ENCODE measurements at regions of chr1 and their contacts with region 1.

Region 1: GRCh38 chr1:37859507-37860345 is at the start of gene MTF1:
- DNase-seq: peak; percentile 98
- ATAC-seq: peak; percentile 98
- H3K4me3 Mint-ChIP-seq: peak within 1 kb of the TSS; percentile 82
- H3K27ac Mint-ChIP-seq: peak within 1 kb of the TSS; percentile 96
- H3K4me1 Mint-ChIP-seq: peaks cover 35% of the 10 kb centered on the region
- H3K27me3 Mint-ChIP-seq: no peaks in the 10 kb centered on the region
- CTCF ChIP-seq: peak; percentile 97
- total RNA-seq, gene MTF1: 17.7 to 21.3 TPM

Region 2: DNA sequence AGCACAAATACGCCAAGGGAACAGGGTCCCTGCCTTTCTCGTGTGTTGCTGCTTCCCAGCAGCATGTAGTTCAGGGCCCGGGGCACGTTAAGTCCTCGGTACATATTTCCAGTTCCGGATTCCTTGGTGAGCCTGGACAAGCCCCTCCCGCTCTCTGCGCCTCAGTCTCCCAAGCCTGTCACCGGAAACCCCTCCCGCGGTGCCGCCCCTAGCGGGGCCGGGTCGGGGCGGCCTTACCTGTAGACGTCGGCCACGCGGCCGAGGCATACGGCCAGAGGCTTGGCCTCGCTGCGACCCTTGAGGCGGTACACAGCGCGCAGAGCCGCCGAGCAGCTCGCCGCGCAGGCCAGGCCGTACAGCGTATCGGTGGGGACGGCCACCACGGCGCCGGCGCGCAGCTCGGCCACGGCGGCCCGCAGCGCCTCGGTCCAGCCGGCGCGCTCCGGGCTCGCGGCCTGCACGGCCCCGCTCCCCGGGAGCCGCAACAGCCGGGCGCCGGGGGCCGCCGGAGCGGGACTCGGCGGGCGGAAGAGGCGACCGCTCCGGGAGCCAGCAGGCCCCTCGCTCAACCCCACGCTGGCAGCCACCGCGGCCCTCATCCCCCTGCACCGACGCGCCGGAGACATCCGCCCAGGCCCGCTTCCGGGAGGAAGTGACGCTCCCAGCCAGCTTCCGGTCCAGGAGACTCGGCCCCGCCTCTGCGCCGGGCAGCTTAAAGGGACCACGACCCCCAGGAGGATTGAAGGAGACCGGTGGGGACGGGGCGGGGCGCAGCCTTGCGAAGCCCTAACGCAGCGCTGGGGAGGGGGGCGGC is 52.0 kb before region 1 on chr1 and contains the starts of genes C1orf122 and YRDC:
- CTCF ChIA-PET with region 1: interaction called, 36 read pairs
- POLR2A ChIA-PET with region 1: interaction called, 28 read pairs
- intact Hi-C with region 1: loop called (anchors 5 kb)
- DNase-seq: peak; percentile 95
- ATAC-seq: peak; percentile 94
- H3K4me3 Mint-ChIP-seq: peak within 1 kb of the TSS; percentile 83
- H3K27ac Mint-ChIP-seq: peak within 1 kb of the TSS; percentile 91
- H3K4me1 Mint-ChIP-seq: peaks cover 34% of the 10 kb centered on the region
- H3K27me3 Mint-ChIP-seq: no peaks in the 10 kb centered on the region
- CTCF ChIP-seq: no peak
- total RNA-seq, gene C1orf122: 17.4 to 17.9 TPM
- total RNA-seq, gene YRDC: 36.2 to 37.1 TPM

Region 3: GRCh38 chr1:37840711-37841110 is 19.0 kb before region 1 on chr1:
- CTCF ChIA-PET with region 1: interaction called, 33 read pairs
- POLR2A ChIA-PET with region 1: interaction called, 6 read pairs
- intact Hi-C with region 1: no loop called
- DNase-seq: no peak
- ATAC-seq: no peak
- H3K4me3 Mint-ChIP-seq: no peak overlapping the region
- H3K27ac Mint-ChIP-seq: no peak overlapping the region
- H3K4me1 Mint-ChIP-seq: peaks cover 21% of the 10 kb centered on the region
- H3K27me3 Mint-ChIP-seq: no peaks in the 10 kb centered on the region
- CTCF ChIP-seq: no peak

Region 4: GRCh38 chr1:37872692-37873091 is 13.0 kb after region 1 on chr1:
- CTCF ChIA-PET with region 1: interaction called, 15 read pairs
- POLR2A ChIA-PET with region 1: interaction called, 4 read pairs
- intact Hi-C with region 1: no loop called
- DNase-seq: no peak
- ATAC-seq: no peak
- H3K4me3 Mint-ChIP-seq: no peak overlapping the region
- H3K27ac Mint-ChIP-seq: no peak overlapping the region
- H3K4me1 Mint-ChIP-seq: no peaks in the 10 kb centered on the region
- H3K27me3 Mint-ChIP-seq: no peaks in the 10 kb centered on the region
- CTCF ChIP-seq: no peak

Region 5: GRCh38 chr1:38012363-38013226 is 152.9 kb after region 1 on chr1 and contains the start of gene UTP11:
- CTCF ChIA-PET with region 1: interaction called, 10 read pairs
- POLR2A ChIA-PET with region 1: no interaction called
- intact Hi-C with region 1: no loop called
- DNase-seq: peak; percentile 94
- ATAC-seq: peak; percentile 77
- H3K4me3 Mint-ChIP-seq: peak within 1 kb of the TSS; percentile 87
- H3K27ac Mint-ChIP-seq: peak within 1 kb of the TSS; percentile 94
- H3K4me1 Mint-ChIP-seq: peaks cover 63% of the 10 kb centered on the region
- H3K27me3 Mint-ChIP-seq: no peaks in the 10 kb centered on the region
- CTCF ChIP-seq: no peak
- total RNA-seq, gene UTP11: 58.1 to 60.6 TPM

Measured in activated CD8-positive, alpha-beta T cell treated with anti-CD3 and anti-CD28 coated beads for 36 hours (primary cell).